CD8-positive, alpha-beta T cell (primary cell): ENCODE measurements at regions of chr18 and their contacts with region 1.

Region 1: GRCh38 chr18:72922895-72923294 is 55.1 kb upstream of the NETO1 start:
- DNase-seq: no peak
- ATAC-seq: no peak
- H3K4me3 ChIP-seq: no peak overlapping the region
- H3K4me3 Mint-ChIP-seq: no peak overlapping the region
- H3K27ac ChIP-seq: no peak overlapping the region
- H3K27ac Mint-ChIP-seq: no peak overlapping the region
- H3K4me1 ChIP-seq: no peaks in the 10 kb centered on the region
- H3K4me1 Mint-ChIP-seq: no peaks in the 10 kb centered on the region
- H3K27me3 ChIP-seq: no peaks in the 10 kb centered on the region
- H3K27me3 Mint-ChIP-seq: no peaks in the 10 kb centered on the region
- CTCF ChIP-seq: no peak

Region 2: GRCh38 chr18:72672364-72673184 is 250.3 kb before region 1 on chr18:
- CTCF ChIA-PET with region 1: no interaction called
- POLR2A ChIA-PET with region 1: no interaction called
- intact Hi-C with region 1: no loop called
- DNase-seq: peak in 1 of 9 experiments; percentile 25
- ATAC-seq: no peak
- H3K4me3 ChIP-seq: no peak overlapping the region
- H3K4me3 Mint-ChIP-seq: no peak overlapping the region
- H3K27ac ChIP-seq: no peak overlapping the region
- H3K27ac Mint-ChIP-seq: no peak overlapping the region
- H3K4me1 ChIP-seq: no peaks in the 10 kb centered on the region
- H3K4me1 Mint-ChIP-seq: no peaks in the 10 kb centered on the region
- H3K27me3 ChIP-seq: no peaks in the 10 kb centered on the region
- H3K27me3 Mint-ChIP-seq: no peaks in the 10 kb centered on the region
- CTCF ChIP-seq: peak; percentile 60

Region 3: GRCh38 chr18:72727038-72727655 is 195.7 kb before region 1 on chr18:
- CTCF ChIA-PET with region 1: no interaction called
- POLR2A ChIA-PET with region 1: no interaction called
- intact Hi-C with region 1: loop called in 1 of 2 experiments (anchors 5 kb)
- DNase-seq: no peak
- ATAC-seq: no peak
- H3K4me3 ChIP-seq: no peak overlapping the region
- H3K4me3 Mint-ChIP-seq: no peak overlapping the region
- H3K27ac ChIP-seq: no peak overlapping the region
- H3K27ac Mint-ChIP-seq: no peak overlapping the region
- H3K4me1 ChIP-seq: no peaks in the 10 kb centered on the region
- H3K4me1 Mint-ChIP-seq: no peaks in the 10 kb centered on the region
- H3K27me3 ChIP-seq: no peaks in the 10 kb centered on the region
- H3K27me3 Mint-ChIP-seq: no peaks in the 10 kb centered on the region
- CTCF ChIP-seq: no peak